ENCODE measurements at regions of chr1 and their contacts with region 1.

Region 1: GRCh38 chr1:23098463-23099170 is 70.0 kb downstream of the LUZP1 start:
- DNase-seq: peak; percentile 64
- CTCF ChIP-seq: peak; percentile 84

Region 2: GRCh38 chr1:23026573-23026972 is 72.0 kb before region 1 on chr1:
- CTCF ChIA-PET with region 1: no interaction called
- POLR2A ChIA-PET with region 1: no interaction called
- DNase-seq: no peak
- CTCF ChIP-seq: no peak

Region 3: DNA sequence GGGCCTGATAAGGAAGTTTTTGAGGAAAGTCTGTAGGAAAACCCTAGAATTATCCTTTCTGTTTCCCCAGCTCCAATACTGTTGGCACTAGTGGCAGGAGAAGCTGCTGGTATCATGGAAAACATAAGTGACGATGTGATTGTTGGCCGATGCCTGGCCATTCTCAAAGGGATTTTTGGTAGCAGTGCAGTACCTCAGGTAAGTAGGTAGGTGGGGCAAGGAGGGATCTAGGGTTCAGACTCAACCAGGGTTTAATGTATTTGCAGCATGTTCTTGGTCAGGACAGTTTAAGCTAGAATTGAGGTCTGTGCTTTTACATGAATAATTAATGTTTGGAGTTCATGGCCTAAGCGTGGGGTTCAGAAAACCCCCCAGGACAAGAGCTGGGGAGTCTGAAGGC is 17.2 kb before region 1 on chr1:
- CTCF ChIA-PET with region 1: interaction called, 22 read pairs
- POLR2A ChIA-PET with region 1: no interaction called
- DNase-seq: no peak
- CTCF ChIP-seq: no peak

Region 4: DNA sequence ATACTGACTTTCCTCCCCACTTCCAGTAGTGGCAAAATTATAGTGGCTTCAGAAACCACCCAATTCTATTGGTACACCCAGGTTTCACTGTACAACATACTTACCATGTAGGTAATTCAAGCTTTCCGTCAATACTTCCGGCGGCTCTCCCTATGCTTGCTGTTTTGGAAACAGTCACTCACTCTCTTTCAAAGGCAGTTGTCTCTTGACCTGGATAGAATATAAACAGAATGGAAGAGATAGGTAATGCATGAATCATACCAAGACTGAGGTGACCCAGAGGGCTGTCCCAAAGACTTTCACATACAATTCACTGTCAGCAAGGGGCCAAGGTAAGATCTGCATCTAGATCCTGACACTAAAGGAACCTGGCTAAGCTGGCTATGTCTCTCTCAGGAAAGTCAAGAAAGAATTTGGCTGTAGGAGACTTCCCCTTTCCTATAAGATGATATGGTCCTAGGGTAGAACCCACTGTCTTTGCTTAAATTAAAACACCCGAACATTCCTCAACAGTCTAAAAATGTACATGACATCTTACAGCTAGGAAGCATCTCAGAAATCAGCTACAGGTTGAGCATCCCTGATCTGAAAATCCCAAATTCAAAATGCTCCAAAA is 10.4 kb after region 1 on chr1:
- CTCF ChIA-PET with region 1: interaction called, 58 read pairs
- POLR2A ChIA-PET with region 1: no interaction called
- DNase-seq: no peak
- CTCF ChIP-seq: no peak

Region 5: DNA sequence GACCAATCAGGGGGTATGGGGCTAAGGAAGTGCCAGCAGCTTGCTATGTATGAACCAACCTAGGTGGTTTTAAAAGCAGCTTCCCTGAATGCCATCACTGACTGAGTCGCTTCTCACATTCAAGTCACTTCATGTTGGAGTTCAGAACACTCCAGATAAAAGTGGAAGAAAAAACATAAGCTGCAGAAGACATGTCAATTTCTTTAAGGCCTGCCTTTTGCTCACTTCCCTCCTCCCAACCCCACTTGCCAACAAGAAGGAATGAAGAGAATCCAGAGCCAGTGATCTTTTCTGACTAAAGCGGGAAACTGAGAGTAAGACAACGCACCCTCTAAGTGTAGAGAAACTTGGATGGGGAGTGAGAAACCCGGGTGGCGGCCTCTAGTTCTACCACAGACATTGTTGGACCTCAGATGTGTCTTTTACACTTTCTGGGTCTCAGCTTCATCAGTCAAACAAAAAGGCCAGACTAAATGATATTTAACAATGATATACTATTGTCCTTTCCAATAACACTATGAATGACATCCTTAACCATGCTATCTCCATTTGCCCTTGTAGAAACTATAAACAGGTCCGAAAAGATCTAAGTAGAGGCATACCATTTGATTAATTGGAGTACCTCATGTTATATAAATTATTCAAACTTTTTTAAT is 15.9 kb after region 1 on chr1:
- CTCF ChIA-PET with region 1: interaction called, 58 read pairs
- POLR2A ChIA-PET with region 1: no interaction called
- DNase-seq: no peak
- CTCF ChIP-seq: no peak

Region 6: DNA sequence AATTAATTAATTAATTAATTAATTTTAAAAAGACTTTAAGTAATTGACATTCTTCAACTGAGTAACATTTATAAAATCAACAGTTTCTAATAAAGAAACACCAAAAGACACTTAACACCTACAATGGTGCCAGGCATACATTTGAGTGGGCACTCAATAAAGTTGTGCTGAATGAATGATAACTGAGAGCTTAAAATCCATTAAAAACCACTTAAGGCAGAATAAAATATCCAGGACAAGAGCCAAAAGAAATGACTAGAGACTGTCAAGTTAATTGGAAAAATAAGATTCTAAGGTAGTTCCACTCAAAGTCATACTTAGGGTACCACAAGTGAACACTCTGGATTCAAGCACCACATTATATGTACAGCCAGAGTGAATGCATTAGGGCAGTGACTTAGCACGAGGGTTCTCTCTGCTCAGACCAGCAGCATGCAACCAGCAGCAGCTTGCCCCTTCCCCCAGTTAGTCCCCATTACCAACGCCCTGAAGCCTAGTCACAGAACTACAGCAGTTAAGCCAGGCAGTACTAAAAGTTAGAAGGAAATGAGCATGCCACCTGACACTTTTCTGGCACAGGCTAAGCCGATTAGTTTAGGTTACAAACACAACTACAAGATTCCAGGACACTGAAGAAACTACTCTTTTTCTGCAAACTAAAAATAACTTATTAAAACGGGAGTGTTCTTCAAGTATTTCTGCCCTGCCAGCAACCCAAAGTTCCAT is 23.6 kb after region 1 on chr1:
- CTCF ChIA-PET with region 1: interaction called, 27 read pairs
- POLR2A ChIA-PET with region 1: no interaction called
- DNase-seq: no peak
- CTCF ChIP-seq: no peak

Region 7: GRCh38 chr1:23152966-23153684 is 54.5 kb after region 1 on chr1:
- CTCF ChIA-PET with region 1: interaction called, 10 read pairs
- POLR2A ChIA-PET with region 1: no interaction called
- DNase-seq: no peak
- CTCF ChIP-seq: no peak

Region 8: DNA sequence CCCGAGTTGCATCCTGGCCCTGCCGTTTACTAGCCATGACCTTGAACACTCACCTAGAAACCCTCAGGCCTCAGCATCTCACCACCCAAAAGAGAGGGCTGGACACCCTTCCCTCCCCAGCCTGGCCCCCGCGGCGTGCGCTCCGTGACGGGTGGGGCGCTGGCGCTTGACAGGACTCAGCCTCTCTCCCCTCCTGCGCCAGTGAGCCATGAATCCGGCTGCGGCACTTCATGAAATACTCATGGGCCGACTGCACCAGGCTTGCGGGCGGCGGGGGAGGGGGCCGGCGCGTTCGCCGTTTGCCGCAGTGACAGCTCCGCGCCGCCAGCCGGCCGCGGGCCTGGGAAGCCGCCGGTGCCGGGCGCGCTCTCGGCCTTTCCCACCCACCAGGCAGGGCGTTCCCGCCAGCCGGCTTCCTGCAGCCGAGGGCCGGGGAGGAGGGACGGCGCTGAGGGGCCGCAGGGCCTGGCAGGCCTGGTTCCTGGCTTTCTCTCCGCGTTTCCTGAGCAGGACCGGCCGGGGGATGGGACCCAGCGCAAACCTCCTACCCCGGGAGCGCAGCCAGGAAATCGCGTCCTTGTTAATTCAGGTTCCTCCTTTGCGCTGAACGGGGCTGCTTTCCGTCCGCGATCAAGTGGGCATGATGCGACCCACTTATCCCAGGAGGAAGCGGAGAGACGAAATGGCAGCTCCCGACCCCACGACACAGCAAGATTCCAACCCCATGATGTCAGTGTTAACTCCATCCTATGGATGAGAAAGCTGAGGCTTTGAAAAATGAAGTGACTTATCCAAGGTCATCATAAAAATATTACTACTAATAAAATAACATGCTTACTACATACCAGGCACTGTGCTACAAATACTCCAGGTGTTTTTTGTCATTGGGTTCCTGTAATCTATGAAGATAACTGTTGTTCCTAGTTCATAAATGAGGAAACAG is 79.1 kb after region 1 on chr1:
- CTCF ChIA-PET with region 1: interaction called, 641 read pairs
- POLR2A ChIA-PET with region 1: no interaction called
- DNase-seq: peak; percentile 85
- CTCF ChIP-seq: no peak

Measured in GM10248 (cell line).